Pancreas (tissue), 10 donors: ENCODE measurements at regions of chr5 and their contacts with region 1.

Region 1: DNA sequence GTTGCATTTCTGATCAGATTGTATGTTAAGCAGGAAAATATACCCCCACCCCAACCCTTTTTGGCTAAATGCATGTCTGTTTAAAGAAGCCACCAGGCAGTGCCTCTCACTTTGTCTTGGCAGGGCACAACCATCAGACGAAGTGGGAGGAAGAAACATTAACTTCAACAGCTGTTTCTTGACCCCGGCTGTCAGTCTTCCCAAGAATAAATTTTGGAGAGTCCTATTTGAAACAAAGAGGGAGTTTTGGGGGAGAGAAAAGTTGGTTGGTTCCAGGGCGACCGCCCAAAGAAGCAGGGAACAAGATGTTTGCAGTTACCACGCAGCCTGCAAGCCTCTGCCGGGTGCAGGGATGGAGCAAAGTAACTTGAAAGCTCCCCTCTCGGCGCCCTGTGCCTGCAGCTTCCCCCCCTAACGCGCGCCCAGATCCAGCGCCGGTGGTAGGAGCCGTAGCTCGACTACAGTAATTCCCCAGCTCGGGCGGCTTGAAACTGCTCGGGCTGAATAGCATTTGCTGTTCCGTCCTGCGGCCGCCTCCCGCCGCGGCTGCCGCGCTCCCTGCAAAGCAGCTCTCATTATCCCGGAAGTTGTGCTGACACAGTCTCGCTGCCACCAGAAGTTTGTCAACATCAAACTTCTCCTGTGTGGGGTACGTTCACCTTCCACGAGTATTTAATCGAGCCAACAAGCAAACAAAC is 100.7 kb upstream of the SSBP2 start:
- DNase-seq: peak; percentile 94 to 98 (median 96)
- ATAC-seq: peak; percentile 93 to 98 (median 96)
- H3K4me3 ChIP-seq: peak overlapping the region in 3 of 4 donors; percentile 23 to 46 (median 43)
- H3K27ac ChIP-seq: peak overlapping the region; percentile 85 to 97 (median 93)
- H3K4me1 ChIP-seq: peaks cover 13 to 41% (median 19%) of the 10 kb centered on the region in 3 donors
- H3K27me3 ChIP-seq: no peaks in the 10 kb centered on the region
- CTCF ChIP-seq: no peak

Region 2: GRCh38 chr5:81495286-81495685 is 356.3 kb before region 1 on chr5:
- intact Hi-C with region 1: no loop called
- DNase-seq: no peak
- ATAC-seq: no peak
- H3K4me3 ChIP-seq: no peak overlapping the region
- H3K27ac ChIP-seq: no peak overlapping the region
- H3K4me1 ChIP-seq: no peaks in the 10 kb centered on the region
- H3K27me3 ChIP-seq: no peaks in the 10 kb centered on the region
- CTCF ChIP-seq: no peak

Region 3: GRCh38 chr5:81513982-81514381 is 337.6 kb before region 1 on chr5:
- intact Hi-C with region 1: loop called in 1 of 3 experiments (anchors 10 kb)
- DNase-seq: no peak
- ATAC-seq: peak in 2 of 4 donors; percentile 51 to 64
- H3K4me3 ChIP-seq: no peak overlapping the region
- H3K27ac ChIP-seq: no peak overlapping the region
- H3K4me1 ChIP-seq: no peaks in the 10 kb centered on the region
- H3K27me3 ChIP-seq: no peaks in the 10 kb centered on the region
- CTCF ChIP-seq: no peak

Region 4: GRCh38 chr5:81787474-81788242 is 64.0 kb before region 1 on chr5:
- intact Hi-C with region 1: loop called in 2 of 3 experiments (anchors 2 kb)
- DNase-seq: peak in 3 of 6 donors; percentile 74 to 83 (median 81)
- ATAC-seq: peak; percentile 81 to 93 (median 83)
- H3K4me3 ChIP-seq: no peak overlapping the region
- H3K27ac ChIP-seq: peak overlapping the region in 3 of 4 donors; percentile 24 to 46 (median 43)
- H3K4me1 ChIP-seq: peaks cover 0 to 19% (median 18%) of the 10 kb centered on the region in 3 donors
- H3K27me3 ChIP-seq: no peaks in the 10 kb centered on the region
- CTCF ChIP-seq: no peak

Region 5: GRCh38 chr5:81912933-81913332 is 61.3 kb after region 1 on chr5:
- intact Hi-C with region 1: no loop called
- DNase-seq: no peak
- ATAC-seq: no peak
- H3K4me3 ChIP-seq: no peak overlapping the region
- H3K27ac ChIP-seq: no peak overlapping the region
- H3K4me1 ChIP-seq: no peaks in the 10 kb centered on the region
- H3K27me3 ChIP-seq: no peaks in the 10 kb centered on the region
- CTCF ChIP-seq: no peak

Region 6: DNA sequence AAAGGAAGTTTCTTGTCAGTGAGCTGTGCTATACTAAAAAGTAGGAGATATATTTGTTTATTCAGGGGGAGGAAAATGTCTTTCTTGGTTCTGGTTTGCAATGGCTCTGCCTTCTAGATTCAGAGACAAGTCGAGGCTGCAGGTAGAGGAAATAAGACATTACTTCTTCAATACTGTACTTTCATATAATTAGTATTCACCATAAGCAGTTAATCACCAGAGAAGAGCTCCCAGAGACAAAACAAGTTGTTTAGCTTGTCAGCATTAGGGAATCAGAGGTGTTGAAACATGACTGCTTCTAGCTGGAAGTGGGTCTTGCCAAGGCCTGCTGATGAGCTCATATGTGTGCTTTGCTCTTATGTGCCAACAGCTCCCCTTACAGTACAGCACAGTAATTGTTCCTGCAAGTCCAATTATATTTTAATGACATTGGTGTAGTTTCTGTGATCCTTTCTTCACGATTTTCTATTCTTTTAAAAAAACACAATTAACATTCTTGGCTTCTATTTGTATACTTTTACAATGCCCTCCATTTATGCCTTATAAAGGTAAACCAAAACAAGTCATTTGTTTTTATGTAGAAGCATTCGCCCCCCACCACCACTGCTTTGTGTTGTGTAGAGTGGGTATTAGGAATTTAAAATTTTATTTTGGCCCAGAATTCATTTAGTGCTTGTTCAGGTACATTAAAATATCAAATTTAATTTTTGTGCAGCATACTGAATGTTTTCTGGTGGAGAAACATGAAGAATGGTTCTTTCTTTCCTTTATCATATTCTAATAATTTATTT is 314.3 kb after region 1 on chr5:
- intact Hi-C with region 1: loop called in 1 of 3 experiments (anchors 5 kb)
- DNase-seq: peak in 5 of 6 donors; percentile 37 to 77 (median 75)
- ATAC-seq: peak; percentile 99 to 100 (median 99)
- H3K4me3 ChIP-seq: no peak overlapping the region
- H3K27ac ChIP-seq: peak overlapping the region; percentile 6 to 51 (median 34)
- H3K4me1 ChIP-seq: peaks cover 0 to 25% (median 23%) of the 10 kb centered on the region in 3 donors
- H3K27me3 ChIP-seq: no peaks in the 10 kb centered on the region
- CTCF ChIP-seq: peak in 3 of 4 donors; percentile 52 to 61 (median 58)